Caco-2 (cell line): ENCODE measurements at regions of chr13 and their contacts with region 1.

Region 1: DNA sequence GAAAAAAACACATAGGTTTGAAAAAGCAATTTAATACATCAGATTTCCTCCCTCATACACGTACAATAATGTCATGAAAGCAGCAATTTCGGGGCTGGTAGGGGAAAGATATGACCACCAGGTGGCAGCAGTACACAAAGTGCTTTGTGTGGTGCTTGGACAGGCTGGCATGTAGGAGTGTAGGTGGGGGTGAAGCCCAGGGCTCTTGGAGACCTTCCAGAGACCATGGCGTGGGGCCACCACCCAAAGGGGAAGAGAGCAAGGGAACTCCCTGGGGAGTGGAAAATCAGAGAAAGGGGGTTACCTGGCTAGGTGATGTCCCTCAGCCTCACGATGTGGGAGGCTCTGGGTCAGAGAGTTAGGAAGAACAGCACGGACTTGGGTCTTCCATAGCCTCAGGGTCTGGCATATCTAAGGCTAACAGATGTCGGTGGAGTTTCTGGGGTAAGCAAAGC is 11.8 kb upstream of the CCNA1 start:
- DNase-seq: peak; percentile 66 to 74
- H3K4me3 ChIP-seq: no peak overlapping the region
- H3K4me3 Mint-ChIP-seq: no peak overlapping the region
- H3K27ac Mint-ChIP-seq: no peak overlapping the region
- H3K4me1 ChIP-seq: no peaks in the 10 kb centered on the region
- H3K4me1 Mint-ChIP-seq: peaks cover 6% of the 10 kb centered on the region
- H3K27me3 ChIP-seq: no peaks in the 10 kb centered on the region
- H3K27me3 Mint-ChIP-seq: no peaks in the 10 kb centered on the region
- CTCF ChIP-seq: peak; percentile 74 to 84

Region 2: DNA sequence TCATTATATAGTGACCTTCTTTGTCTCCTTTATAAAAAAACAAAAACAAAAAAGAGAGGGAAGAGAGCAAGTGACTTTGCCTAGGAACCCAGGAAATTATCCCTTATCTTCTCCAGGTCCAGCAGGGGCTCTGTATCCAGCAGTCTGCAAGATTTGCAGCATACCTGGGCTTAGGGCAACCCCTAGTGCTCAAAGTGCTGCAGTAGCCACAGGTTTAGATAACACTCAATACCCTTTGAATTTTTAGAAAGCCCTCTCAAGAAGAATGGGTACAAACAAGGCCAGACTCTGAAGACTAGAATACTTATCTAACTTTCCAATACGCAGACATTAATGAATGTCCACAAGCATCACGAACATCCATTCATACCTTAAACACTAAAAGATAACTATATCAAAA is 55.0 kb after region 1 on chr13:
- CTCF ChIA-PET with region 1: no interaction called
- POLR2A ChIA-PET with region 1: no interaction called
- intact Hi-C with region 1: loop called (anchors 2 kb)
- DNase-seq: peak in 1 of 2 experiments; percentile 11
- H3K4me3 ChIP-seq: no peak overlapping the region
- H3K4me3 Mint-ChIP-seq: no peak overlapping the region
- H3K27ac Mint-ChIP-seq: no peak overlapping the region
- H3K4me1 ChIP-seq: no peaks in the 10 kb centered on the region
- H3K4me1 Mint-ChIP-seq: no peaks in the 10 kb centered on the region
- H3K27me3 ChIP-seq: no peaks in the 10 kb centered on the region
- H3K27me3 Mint-ChIP-seq: no peaks in the 10 kb centered on the region
- CTCF ChIP-seq: peak in 1 of 2 experiments; percentile 7

Region 3: GRCh38 chr13:36736119-36736726 is 315.8 kb after region 1 on chr13:
- CTCF ChIA-PET with region 1: interaction called, 4 read pairs
- POLR2A ChIA-PET with region 1: no interaction called
- intact Hi-C with region 1: loop called (anchors 1 kb)
- DNase-seq: peak in 1 of 2 experiments; percentile 58
- H3K4me3 ChIP-seq: no peak overlapping the region
- H3K4me3 Mint-ChIP-seq: no peak overlapping the region
- H3K27ac Mint-ChIP-seq: no peak overlapping the region
- H3K4me1 ChIP-seq: no peaks in the 10 kb centered on the region
- H3K4me1 Mint-ChIP-seq: no peaks in the 10 kb centered on the region
- H3K27me3 ChIP-seq: no peaks in the 10 kb centered on the region
- H3K27me3 Mint-ChIP-seq: peaks cover 10% of the 10 kb centered on the region
- CTCF ChIP-seq: peak; percentile 65 to 83

Region 4: DNA sequence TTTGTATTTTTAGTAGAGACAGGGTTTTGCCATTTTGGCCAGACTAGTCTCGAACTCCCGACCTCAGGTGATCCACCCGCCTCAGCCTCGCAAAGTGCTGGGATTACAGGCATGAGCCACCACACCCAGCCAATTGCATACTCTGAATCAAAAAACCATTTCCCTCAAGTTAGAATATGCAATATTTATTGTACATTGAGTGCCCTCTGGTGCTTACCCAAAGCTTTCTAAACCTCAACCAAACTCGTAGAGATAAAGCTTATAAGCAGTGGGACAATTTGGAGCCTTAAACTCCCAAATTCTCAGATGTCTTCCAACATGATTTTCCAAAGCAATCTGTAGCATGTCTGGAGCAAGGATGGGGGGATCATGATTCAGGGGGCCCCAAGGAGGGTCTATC is 420.9 kb after region 1 on chr13:
- CTCF ChIA-PET with region 1: no interaction called
- POLR2A ChIA-PET with region 1: no interaction called
- intact Hi-C with region 1: loop called (anchors 2 kb)
- DNase-seq: no peak
- H3K4me3 ChIP-seq: no peak overlapping the region
- H3K4me3 Mint-ChIP-seq: no peak overlapping the region
- H3K27ac Mint-ChIP-seq: no peak overlapping the region
- H3K4me1 ChIP-seq: no peaks in the 10 kb centered on the region
- H3K4me1 Mint-ChIP-seq: no peaks in the 10 kb centered on the region
- H3K27me3 ChIP-seq: no peaks in the 10 kb centered on the region
- H3K27me3 Mint-ChIP-seq: no peaks in the 10 kb centered on the region
- CTCF ChIP-seq: no peak

Region 5: DNA sequence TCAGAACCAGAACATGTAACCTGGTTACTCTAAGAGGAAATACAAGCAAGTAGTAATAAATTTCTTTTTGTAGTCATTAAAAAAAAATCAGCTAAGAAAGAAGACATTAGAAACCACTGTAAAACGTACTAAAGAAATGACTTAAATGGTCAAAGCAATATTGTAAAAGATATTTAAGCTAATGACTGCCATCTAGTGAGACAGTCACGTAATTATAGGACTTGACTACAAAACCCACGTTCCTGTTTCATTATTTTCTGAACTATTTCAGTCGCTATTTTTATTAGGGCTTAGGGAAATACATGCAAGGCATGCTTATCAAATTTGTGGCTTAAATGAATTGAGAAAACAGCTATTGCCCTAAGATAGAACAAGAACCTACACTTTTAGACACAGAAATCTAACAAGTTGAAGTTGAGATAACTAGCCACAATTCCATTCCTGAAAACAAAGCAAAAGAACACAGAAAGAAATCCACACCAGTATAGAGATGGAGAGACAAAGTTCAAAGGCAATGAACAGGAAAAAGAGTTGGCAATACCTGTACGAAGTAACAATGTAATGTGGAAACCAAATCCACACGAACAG is 560.8 kb after region 1 on chr13:
- CTCF ChIA-PET with region 1: no interaction called
- POLR2A ChIA-PET with region 1: no interaction called
- intact Hi-C with region 1: loop called (anchors 2 kb)
- DNase-seq: no peak
- H3K4me3 ChIP-seq: no peak overlapping the region
- H3K4me3 Mint-ChIP-seq: no peak overlapping the region
- H3K27ac Mint-ChIP-seq: no peak overlapping the region
- H3K4me1 ChIP-seq: no peaks in the 10 kb centered on the region
- H3K4me1 Mint-ChIP-seq: no peaks in the 10 kb centered on the region
- H3K27me3 ChIP-seq: no peaks in the 10 kb centered on the region
- H3K27me3 Mint-ChIP-seq: no peaks in the 10 kb centered on the region
- CTCF ChIP-seq: peak in 1 of 2 experiments; percentile 39